ENCODE measurements at regions of chr4 and their contacts with region 1.

Region 1: GRCh38 chr4:139540632-139541031 is 15.4 kb downstream of the SETD7 start:
- DNase-seq: no peak
- ATAC-seq: no peak
- H3K4me3 ChIP-seq: no peak overlapping the region
- H3K27ac ChIP-seq: no peak overlapping the region
- H3K4me1 ChIP-seq: no peaks in the 10 kb centered on the region
- H3K27me3 ChIP-seq: no peaks in the 10 kb centered on the region
- CTCF ChIP-seq: no peak

Region 2: GRCh38 chr4:139403462-139403861 is 137.2 kb before region 1 on chr4:
- CTCF ChIA-PET with region 1: no interaction called
- POLR2A ChIA-PET with region 1: no interaction called
- in situ Hi-C with region 1: no loop called
- intact Hi-C with region 1: loop called (anchors 10 kb)
- DNase-seq: no peak
- ATAC-seq: 0 out of 2 replicates have a peak, but pooled peaks have one; percentile 50
- H3K4me3 ChIP-seq: no peak overlapping the region
- H3K27ac ChIP-seq: no peak overlapping the region
- H3K4me1 ChIP-seq: no peaks in the 10 kb centered on the region
- H3K27me3 ChIP-seq: no peaks in the 10 kb centered on the region
- CTCF ChIP-seq: peak; percentile 8; the same call in 1 of the 2 replicates